WTC11 (cell line): ENCODE measurements at regions of chr1 and their contacts with region 1.

Region 1: GRCh38 chr1:110412576-110412975 is 5.1 kb upstream of the LAMTOR5 start:
- DNase-seq: peak; percentile 82
- ATAC-seq: peak; percentile 78
- H3K4me3 Mint-ChIP-seq: no peak overlapping the region
- H3K27ac Mint-ChIP-seq: no peak overlapping the region
- H3K4me1 Mint-ChIP-seq: peaks cover 23% of the 10 kb centered on the region
- H3K27me3 Mint-ChIP-seq: peaks cover 2% of the 10 kb centered on the region; the same call in 1 of the 2 replicates
- CTCF ChIP-seq: peak; percentile 55; the same call in 1 of the 2 replicates

Region 2: DNA sequence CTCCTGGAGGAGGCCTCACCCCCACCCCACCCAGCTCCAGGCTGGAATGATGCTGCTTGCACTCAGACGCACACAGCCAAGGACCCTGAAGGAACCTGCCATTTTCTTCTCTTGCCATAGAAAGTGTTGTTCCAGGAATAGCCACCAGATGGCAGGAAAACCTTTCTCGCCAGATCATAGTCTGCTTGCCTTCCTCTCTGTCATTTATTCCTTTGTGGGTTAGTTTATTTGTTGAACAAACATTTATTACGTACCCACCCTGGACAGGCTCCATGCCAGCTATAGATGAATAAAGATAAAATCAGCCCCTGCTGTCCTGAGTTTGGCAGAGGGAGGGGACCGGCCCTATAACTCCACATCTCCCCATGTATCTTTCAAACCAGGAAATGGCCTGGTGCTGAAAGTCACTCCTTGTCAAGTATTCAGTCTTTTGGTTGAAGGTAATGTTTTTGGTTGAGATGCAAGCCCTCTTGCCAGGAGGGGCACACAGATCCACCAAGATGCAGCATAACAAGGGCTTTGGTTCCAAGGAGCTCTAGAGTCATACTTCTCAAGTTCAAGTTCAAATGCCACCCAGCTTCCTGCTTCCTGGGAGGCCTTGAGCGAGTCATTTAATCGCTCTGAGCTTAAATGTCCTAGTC is 209.4 kb before region 1 on chr1:
- CTCF ChIA-PET with region 1: interaction called, 21 read pairs
- POLR2A ChIA-PET with region 1: no interaction called
- DNase-seq: peak; percentile 62
- ATAC-seq: peak; percentile 56
- H3K4me3 Mint-ChIP-seq: no peak overlapping the region
- H3K27ac Mint-ChIP-seq: no peak overlapping the region
- H3K4me1 Mint-ChIP-seq: peaks cover 4% of the 10 kb centered on the region
- H3K27me3 Mint-ChIP-seq: no peaks in the 10 kb centered on the region
- CTCF ChIP-seq: peak; percentile 74

Region 3: GRCh38 chr1:110338886-110339406 is 73.6 kb before region 1 on chr1 and contains the start of gene RBM15:
- CTCF ChIA-PET with region 1: interaction called, 15 read pairs
- POLR2A ChIA-PET with region 1: interaction called, 4 read pairs
- DNase-seq: peak; percentile 96
- ATAC-seq: peak; percentile 84
- H3K4me3 Mint-ChIP-seq: no peak within 1 kb of the TSS
- H3K27ac Mint-ChIP-seq: no peak within 1 kb of the TSS; the same call in 1 of the 2 replicates
- H3K4me1 Mint-ChIP-seq: peaks cover 52% of the 10 kb centered on the region
- H3K27me3 Mint-ChIP-seq: no peaks in the 10 kb centered on the region
- CTCF ChIP-seq: no peak
- total RNA-seq, gene RBM15: 43.5 to 50.6 TPM (median 44.8 TPM) in 3 replicates

Region 4: DNA sequence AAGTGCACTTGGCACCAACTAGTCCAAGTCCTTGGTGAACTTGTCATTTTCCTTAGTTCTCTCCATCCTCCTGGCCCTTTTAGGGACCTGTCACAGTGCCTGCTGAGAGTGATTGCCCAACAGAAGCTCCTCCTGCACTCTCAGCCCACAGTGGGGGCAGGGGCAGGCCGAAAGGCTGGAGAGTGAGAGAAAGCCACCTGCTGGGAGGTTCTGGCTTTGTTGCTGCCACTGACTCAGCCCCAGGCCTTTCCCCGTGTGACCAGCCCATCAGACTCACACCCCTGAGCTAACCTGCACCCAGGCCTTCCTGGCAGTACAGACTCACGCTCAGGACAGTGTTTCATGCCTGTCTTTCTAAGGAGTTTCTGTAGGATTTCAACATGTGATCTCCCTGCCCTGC is 21.2 kb after region 1 on chr1:
- CTCF ChIA-PET with region 1: interaction called, 44 read pairs
- POLR2A ChIA-PET with region 1: interaction called, 3 read pairs
- DNase-seq: peak; percentile 68
- ATAC-seq: peak; percentile 96
- H3K4me3 Mint-ChIP-seq: no peak overlapping the region
- H3K27ac Mint-ChIP-seq: no peak overlapping the region
- H3K4me1 Mint-ChIP-seq: peaks cover 21% of the 10 kb centered on the region
- H3K27me3 Mint-ChIP-seq: no peaks in the 10 kb centered on the region
- CTCF ChIP-seq: no peak